ENCODE measurements at regions of chr3 and their contacts with region 1.

Region 1: GRCh38 chr3:188954590-188955208 is 217.1 kb upstream of the TPRG1 start:
- DNase-seq: peak; percentile 92
- H3K4me3 ChIP-seq: no peak overlapping the region
- H3K27ac ChIP-seq: no peak overlapping the region
- H3K4me1 ChIP-seq: peaks cover 6% of the 10 kb centered on the region
- H3K27me3 ChIP-seq: no peaks in the 10 kb centered on the region
- CTCF ChIP-seq: peak; percentile 97

Region 2: DNA sequence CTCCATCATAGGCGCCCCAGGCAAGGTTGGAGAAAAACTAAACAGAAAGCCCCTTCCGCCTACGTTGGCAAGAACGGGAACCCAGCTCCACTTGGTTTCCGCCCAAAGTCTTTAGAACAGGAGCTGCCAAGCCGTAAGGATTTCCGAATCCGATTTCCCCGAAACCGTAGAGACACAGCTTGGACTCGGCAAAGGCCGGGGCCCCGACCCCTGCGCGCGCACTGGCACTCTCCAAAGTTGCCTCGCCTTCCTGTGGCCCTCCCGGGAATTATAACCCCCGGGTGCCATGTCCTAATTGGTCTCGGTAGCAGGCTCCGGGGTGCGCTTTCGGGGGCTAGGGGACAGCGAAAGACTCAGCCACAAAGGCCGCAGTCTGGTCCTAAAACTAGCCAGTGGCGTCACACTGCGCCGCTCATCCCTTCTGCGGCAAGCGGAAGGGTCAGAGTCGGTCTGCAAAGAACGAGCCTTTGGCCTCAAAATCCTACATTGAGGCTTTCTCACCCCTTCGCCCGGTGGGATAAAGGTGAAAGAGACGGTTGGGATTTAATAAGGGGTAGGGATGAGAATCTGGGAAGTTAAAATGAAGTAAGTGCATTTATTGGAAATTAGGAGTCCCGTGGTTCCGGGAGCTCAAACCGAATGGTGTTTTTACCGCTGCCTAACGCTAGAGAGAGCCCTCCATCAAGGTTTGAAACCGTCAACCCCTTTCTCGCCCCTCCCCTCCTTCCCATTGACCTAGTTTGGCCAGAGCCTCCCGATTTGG is 1216.2 kb before region 1 on chr3:
- CTCF ChIA-PET with region 1: interaction called, 116 read pairs
- POLR2A ChIA-PET with region 1: no interaction called
- intact Hi-C with region 1: loop called (anchors 1 kb)
- DNase-seq: peak; percentile 90
- H3K4me3 ChIP-seq: peak overlapping the region; percentile 70
- H3K27ac ChIP-seq: peak overlapping the region; percentile 58
- H3K4me1 ChIP-seq: peaks cover 29% of the 10 kb centered on the region
- H3K27me3 ChIP-seq: no peaks in the 10 kb centered on the region
- CTCF ChIP-seq: peak; percentile 87

Region 3: GRCh38 chr3:188510366-188510765 is 444.3 kb before region 1 on chr3:
- CTCF ChIA-PET with region 1: interaction called, 10 read pairs
- POLR2A ChIA-PET with region 1: no interaction called
- intact Hi-C with region 1: loop called (anchors 2 kb)
- DNase-seq: peak; percentile 52
- H3K4me3 ChIP-seq: no peak overlapping the region
- H3K27ac ChIP-seq: peak overlapping the region; percentile 85
- H3K4me1 ChIP-seq: peaks cover 54% of the 10 kb centered on the region
- H3K27me3 ChIP-seq: no peaks in the 10 kb centered on the region
- CTCF ChIP-seq: no peak

Region 4: GRCh38 chr3:188780193-188781147 is 174.2 kb before region 1 on chr3:
- CTCF ChIA-PET with region 1: interaction called, 21 read pairs
- POLR2A ChIA-PET with region 1: no interaction called
- intact Hi-C with region 1: no loop called
- DNase-seq: no peak
- H3K4me3 ChIP-seq: no peak overlapping the region
- H3K27ac ChIP-seq: no peak overlapping the region
- H3K4me1 ChIP-seq: no peaks in the 10 kb centered on the region
- H3K27me3 ChIP-seq: no peaks in the 10 kb centered on the region
- CTCF ChIP-seq: no peak

Region 5: DNA sequence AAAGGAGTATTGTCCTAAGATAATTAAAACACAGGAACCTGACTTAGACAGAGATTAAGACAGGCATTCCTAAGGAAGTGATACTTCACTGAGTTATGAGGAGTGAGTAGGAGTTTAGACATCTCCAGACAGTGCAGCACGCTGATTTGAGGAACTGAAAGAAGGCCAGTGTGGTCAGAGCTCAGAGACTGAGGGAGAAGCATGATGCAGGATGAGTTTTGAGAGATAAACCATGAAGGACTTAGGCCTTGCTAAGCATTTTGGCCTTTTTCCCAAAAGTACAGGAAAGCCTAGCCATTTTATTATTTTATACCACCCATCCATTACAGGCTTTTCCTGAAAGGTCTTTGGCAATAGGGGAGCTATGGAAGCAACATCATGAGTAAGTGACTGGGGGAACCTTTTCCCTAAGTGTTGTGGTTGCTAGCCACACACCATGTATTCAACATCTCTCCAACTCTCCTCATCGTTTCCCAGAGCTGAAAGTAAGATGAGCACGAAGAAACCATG is 158.5 kb before region 1 on chr3:
- CTCF ChIA-PET with region 1: no interaction called
- POLR2A ChIA-PET with region 1: no interaction called
- intact Hi-C with region 1: no loop called
- DNase-seq: peak; percentile 17
- H3K4me3 ChIP-seq: no peak overlapping the region
- H3K27ac ChIP-seq: no peak overlapping the region
- H3K4me1 ChIP-seq: peaks cover 8% of the 10 kb centered on the region
- H3K27me3 ChIP-seq: no peaks in the 10 kb centered on the region
- CTCF ChIP-seq: no peak

Region 6: GRCh38 chr3:189123595-189124387 is 169.1 kb after region 1 on chr3:
- CTCF ChIA-PET with region 1: no interaction called
- POLR2A ChIA-PET with region 1: no interaction called
- intact Hi-C with region 1: no loop called
- DNase-seq: no peak
- H3K4me3 ChIP-seq: no peak overlapping the region
- H3K27ac ChIP-seq: no peak overlapping the region
- H3K4me1 ChIP-seq: no peaks in the 10 kb centered on the region
- H3K27me3 ChIP-seq: no peaks in the 10 kb centered on the region
- CTCF ChIP-seq: no peak

Region 7: DNA sequence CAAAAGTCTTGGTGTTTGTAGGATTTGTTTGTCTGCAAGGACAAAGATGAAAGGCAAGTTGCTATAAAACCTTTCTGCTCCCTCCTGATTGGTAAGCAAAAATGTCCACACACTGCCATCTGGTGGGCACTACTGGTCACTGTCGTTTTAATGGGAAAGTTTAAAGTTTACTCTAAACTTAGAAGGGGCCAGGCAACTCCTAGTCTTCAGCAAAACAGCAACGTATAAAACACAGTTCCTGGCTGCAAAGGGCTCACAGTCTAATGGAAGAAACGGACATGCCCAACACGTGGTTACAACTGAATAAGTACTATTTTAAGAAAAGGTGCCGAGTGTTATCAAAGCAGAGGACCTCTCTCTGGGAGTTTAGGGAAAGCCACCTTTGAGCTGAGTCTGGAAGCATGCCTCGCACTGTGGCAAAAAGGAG is 193.4 kb after region 1 on chr3:
- CTCF ChIA-PET with region 1: interaction called, 3 read pairs
- POLR2A ChIA-PET with region 1: no interaction called
- intact Hi-C with region 1: loop called (anchors 5 kb)
- DNase-seq: peak; percentile 75
- H3K4me3 ChIP-seq: no peak overlapping the region
- H3K27ac ChIP-seq: no peak overlapping the region
- H3K4me1 ChIP-seq: peaks cover 4% of the 10 kb centered on the region
- H3K27me3 ChIP-seq: no peaks in the 10 kb centered on the region
- CTCF ChIP-seq: peak; percentile 86

Measured in A673 (cell line).